Activated CD8-positive, alpha-beta T cell treated with anti-CD3 and anti-CD28 coated beads, Interleukin-2, amount 10 ng/mL, durations not matched to agents 7 days and 5 days (primary cell): ENCODE measurements at regions of chr6 and their contacts with region 1.

Region 1: DNA sequence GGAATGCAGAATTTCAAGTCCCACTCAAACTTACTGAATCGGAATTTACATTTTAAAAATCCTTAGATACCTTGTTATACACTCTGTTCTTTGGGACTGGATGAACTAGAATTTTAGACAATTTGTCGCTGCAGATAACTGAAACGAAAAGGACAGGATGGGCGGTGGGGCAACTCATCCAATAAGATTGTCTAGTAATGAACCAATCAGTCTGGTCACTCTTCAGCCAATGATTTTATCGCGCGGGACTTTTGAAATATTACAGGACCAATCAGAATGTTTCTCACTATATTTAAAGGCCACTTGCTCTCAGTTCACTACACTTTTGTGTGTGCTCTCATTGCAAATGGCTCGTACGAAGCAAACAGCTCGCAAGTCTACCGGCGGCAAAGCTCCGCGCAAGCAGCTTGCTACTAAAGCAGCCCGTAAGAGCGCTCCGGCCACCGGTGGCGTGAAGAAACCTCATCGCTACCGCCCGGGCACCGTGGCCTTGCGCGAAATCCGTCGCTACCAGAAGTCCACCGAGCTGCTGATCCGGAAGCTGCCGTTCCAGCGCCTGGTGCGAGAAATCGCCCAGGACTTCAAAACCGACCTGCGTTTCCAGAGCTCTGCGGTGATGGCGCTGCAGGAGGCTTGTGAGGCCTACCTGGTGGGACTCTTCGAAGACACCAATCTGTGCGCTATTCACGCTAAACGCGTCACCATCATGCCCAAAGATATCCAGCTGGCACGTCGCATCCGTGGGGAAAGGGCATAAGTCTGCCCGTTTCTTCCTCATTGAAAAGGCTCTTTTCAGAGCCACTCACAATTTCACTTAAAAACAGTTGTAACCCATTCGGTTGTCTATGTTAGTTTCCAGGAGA is 41.9 kb upstream of the HFE start:
- DNase-seq: peak; percentile 91
- ATAC-seq: peak; percentile 55
- H3K4me3 Mint-ChIP-seq: peak overlapping the region; percentile 88
- H3K27ac Mint-ChIP-seq: peak overlapping the region; percentile 99
- H3K4me1 Mint-ChIP-seq: peaks cover 43% of the 10 kb centered on the region
- H3K27me3 Mint-ChIP-seq: no peaks in the 10 kb centered on the region

Region 2: DNA sequence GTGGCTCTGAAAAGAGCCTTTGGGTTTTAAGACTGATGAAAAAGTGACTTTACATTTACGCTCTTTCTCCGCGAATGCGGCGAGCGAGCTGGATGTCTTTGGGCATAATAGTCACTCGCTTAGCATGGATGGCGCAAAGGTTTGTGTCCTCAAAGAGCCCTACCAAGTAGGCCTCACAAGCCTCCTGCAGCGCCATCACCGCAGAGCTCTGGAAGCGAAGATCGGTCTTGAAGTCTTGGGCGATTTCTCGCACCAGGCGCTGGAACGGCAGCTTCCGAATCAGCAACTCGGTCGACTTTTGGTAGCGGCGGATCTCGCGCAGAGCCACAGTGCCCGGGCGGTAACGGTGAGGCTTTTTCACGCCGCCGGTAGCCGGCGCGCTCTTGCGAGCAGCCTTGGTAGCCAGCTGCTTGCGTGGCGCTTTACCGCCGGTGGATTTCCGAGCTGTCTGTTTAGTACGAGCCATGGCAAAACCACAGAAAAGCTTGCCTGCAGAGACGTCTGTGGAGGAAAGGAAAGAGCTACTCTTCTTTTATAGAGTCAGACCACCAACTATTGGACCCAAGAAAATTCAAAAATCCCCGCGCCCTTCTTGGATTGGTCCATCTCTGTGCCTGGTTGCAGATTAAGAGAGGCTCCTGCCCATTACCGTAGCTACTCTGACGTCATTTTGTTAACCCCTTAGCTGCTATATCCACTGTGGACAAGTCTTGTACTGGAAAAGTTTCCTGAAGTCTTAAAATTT is 13.5 kb before region 1 on chr6:
- CTCF ChIA-PET with region 1: interaction called, 57 read pairs
- POLR2A ChIA-PET with region 1: interaction called, 1,951 read pairs
- DNase-seq: peak; percentile 97
- ATAC-seq: peak; percentile 66
- H3K4me3 Mint-ChIP-seq: peak overlapping the region; percentile 93
- H3K27ac Mint-ChIP-seq: peak overlapping the region; percentile 99
- H3K4me1 Mint-ChIP-seq: peaks cover 68% of the 10 kb centered on the region
- H3K27me3 Mint-ChIP-seq: peaks cover 3% of the 10 kb centered on the region

Region 3: GRCh38 chr6:26183581-26184366 is 138.5 kb after region 1 on chr6:
- CTCF ChIA-PET with region 1: no interaction called
- POLR2A ChIA-PET with region 1: interaction called, 63 read pairs
- DNase-seq: peak; percentile 80
- ATAC-seq: peak; percentile 80
- H3K4me3 Mint-ChIP-seq: peak overlapping the region; percentile 83
- H3K27ac Mint-ChIP-seq: peak overlapping the region; percentile 97
- H3K4me1 Mint-ChIP-seq: peaks cover 79% of the 10 kb centered on the region
- H3K27me3 Mint-ChIP-seq: no peaks in the 10 kb centered on the region

Region 4: DNA sequence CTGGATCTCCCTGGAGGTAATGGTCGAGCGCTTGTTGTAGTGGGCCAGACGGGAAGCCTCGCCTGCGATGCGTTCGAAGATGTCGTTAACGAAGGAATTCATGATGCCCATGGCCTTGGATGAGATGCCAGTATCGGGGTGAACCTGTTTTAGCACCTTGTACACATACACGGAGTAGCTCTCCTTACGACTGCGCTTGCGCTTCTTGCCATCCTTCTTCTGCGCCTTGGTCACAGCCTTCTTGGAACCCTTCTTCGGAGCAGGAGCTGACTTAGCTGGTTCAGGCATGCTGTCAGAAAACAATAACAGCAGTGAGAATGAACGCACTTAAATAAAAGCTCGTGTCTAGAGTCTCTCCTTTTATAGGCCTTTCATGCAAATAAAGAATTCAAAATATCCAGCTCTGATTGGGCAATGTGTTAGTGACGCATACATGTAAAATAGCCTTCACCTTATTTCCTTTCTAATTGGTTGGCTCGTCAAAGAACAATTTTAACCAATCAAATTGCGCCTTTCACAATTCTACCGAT is 171.1 kb after region 1 on chr6:
- CTCF ChIA-PET with region 1: no interaction called
- POLR2A ChIA-PET with region 1: interaction called, 66 read pairs
- DNase-seq: peak; percentile 93
- ATAC-seq: peak; percentile 67
- H3K4me3 Mint-ChIP-seq: no peak overlapping the region
- H3K27ac Mint-ChIP-seq: no peak overlapping the region
- H3K4me1 Mint-ChIP-seq: peaks cover 43% of the 10 kb centered on the region
- H3K27me3 Mint-ChIP-seq: no peaks in the 10 kb centered on the region

Region 5: DNA sequence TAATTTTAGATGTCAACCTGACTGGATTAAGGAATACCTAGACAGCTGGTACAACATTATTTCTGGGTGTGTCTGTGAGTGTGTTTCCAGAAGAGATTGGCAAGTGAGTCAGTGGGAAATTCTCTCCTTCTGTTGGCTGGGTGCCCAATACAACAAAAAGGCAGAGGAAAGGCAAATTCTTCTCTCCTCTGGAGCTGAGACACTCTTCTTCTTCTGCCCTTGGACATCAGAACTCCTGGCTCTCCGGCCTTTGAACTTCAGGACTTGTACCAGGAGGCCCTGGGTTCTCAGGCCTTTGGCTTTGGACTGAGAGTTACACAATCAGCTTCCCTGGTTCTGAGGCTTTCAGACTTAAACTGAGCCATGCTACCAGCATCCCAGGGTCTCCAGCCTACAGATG is 349.0 kb after region 1 on chr6:
- CTCF ChIA-PET with region 1: no interaction called
- POLR2A ChIA-PET with region 1: no interaction called
- DNase-seq: no peak
- ATAC-seq: no peak
- H3K4me3 Mint-ChIP-seq: no peak overlapping the region
- H3K27ac Mint-ChIP-seq: no peak overlapping the region
- H3K4me1 Mint-ChIP-seq: peaks cover 2% of the 10 kb centered on the region
- H3K27me3 Mint-ChIP-seq: no peaks in the 10 kb centered on the region

Region 6: GRCh38 chr6:27138837-27139755 is 1093.8 kb after region 1 on chr6:
- CTCF ChIA-PET with region 1: no interaction called
- POLR2A ChIA-PET with region 1: interaction called, 52 read pairs
- DNase-seq: peak; percentile 87
- ATAC-seq: peak; percentile 68
- H3K4me3 Mint-ChIP-seq: peak overlapping the region; percentile 95
- H3K27ac Mint-ChIP-seq: peak overlapping the region; percentile 98
- H3K4me1 Mint-ChIP-seq: peaks cover 71% of the 10 kb centered on the region
- H3K27me3 Mint-ChIP-seq: no peaks in the 10 kb centered on the region

Region 7: GRCh38 chr6:27394073-27394472 is 1348.8 kb after region 1 on chr6:
- CTCF ChIA-PET with region 1: no interaction called
- POLR2A ChIA-PET with region 1: no interaction called
- DNase-seq: no peak
- ATAC-seq: no peak
- H3K4me3 Mint-ChIP-seq: no peak overlapping the region
- H3K27ac Mint-ChIP-seq: no peak overlapping the region
- H3K4me1 Mint-ChIP-seq: peaks cover 8% of the 10 kb centered on the region
- H3K27me3 Mint-ChIP-seq: no peaks in the 10 kb centered on the region